WTC11 (cell line): ENCODE measurements at regions of chr1 and their contacts with region 1.

Region 1: GRCh38 chr1:36342481-36343478 is 19.3 kb upstream of the EVA1B start:
- DNase-seq: peak; percentile 73
- ATAC-seq: peak; percentile 85
- H3K4me3 Mint-ChIP-seq: no peak overlapping the region
- H3K27ac Mint-ChIP-seq: no peak overlapping the region
- H3K4me1 Mint-ChIP-seq: no peaks in the 10 kb centered on the region
- H3K27me3 Mint-ChIP-seq: no peaks in the 10 kb centered on the region
- CTCF ChIP-seq: peak; percentile 25; the same call in 1 of the 2 replicates

Region 2: DNA sequence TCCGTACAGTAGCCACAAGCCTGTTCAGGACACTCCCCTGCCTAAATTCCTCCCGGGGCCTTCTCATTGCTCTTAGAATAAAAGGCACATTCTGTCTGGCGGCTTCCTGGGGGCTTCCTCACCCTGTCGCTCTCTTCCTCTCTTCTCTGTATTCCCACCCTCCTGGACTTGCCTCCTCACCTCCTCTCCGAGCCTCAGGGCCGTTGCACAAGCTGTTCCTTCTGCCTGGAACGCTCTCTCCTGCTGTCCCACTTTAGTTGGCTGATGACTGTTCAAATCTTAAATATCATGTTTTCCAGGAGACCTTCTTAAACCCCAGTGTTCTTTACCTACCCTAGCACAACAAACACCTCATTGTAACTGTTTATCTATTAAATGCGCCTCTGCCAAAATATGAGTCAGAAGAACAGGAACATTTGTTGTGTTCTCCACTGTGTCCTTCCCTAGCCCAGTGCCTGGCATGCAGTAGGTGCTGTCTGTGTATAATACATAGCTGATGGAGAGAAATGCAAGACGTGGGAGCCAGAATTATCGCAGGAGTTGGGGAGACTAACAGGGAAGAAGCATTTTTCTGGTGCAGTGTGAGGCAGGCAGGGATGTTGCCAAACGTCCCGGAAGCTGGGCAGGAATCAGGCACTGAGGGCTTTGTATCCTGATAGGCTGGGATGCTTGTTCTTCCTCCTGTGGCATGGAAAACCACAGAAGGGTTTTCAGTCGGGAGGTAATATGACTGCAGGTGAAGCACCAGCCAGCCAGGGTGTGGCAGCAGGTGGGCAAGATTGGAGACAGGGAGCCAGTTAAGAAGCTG is 142.6 kb before region 1 on chr1:
- CTCF ChIA-PET with region 1: no interaction called
- POLR2A ChIA-PET with region 1: no interaction called
- DNase-seq: no peak
- ATAC-seq: no peak
- H3K4me3 Mint-ChIP-seq: no peak overlapping the region
- H3K27ac Mint-ChIP-seq: 0 out of 2 replicates have a peak overlapping the region, but pooled peaks have one; percentile 1
- H3K4me1 Mint-ChIP-seq: peaks cover 8% of the 10 kb centered on the region
- H3K27me3 Mint-ChIP-seq: no peaks in the 10 kb centered on the region; the same call in 1 of the 2 replicates
- CTCF ChIP-seq: no peak

Region 3: GRCh38 chr1:36323597-36324352 is 19.0 kb before region 1 on chr1 and contains the start of gene EVA1B:
- CTCF ChIA-PET with region 1: interaction called, 30 read pairs
- POLR2A ChIA-PET with region 1: interaction called, 3 read pairs
- DNase-seq: peak; percentile 74
- ATAC-seq: peak; percentile 15
- H3K4me3 Mint-ChIP-seq: peak within 1 kb of the TSS; percentile 76
- H3K27ac Mint-ChIP-seq: peak within 1 kb of the TSS; percentile 65
- H3K4me1 Mint-ChIP-seq: peaks cover 25% of the 10 kb centered on the region
- H3K27me3 Mint-ChIP-seq: peaks cover 10% of the 10 kb centered on the region
- CTCF ChIP-seq: no peak
- total RNA-seq, gene EVA1B: 32.0 to 45.2 TPM (median 41.5 TPM) in 3 replicates

Region 4: DNA sequence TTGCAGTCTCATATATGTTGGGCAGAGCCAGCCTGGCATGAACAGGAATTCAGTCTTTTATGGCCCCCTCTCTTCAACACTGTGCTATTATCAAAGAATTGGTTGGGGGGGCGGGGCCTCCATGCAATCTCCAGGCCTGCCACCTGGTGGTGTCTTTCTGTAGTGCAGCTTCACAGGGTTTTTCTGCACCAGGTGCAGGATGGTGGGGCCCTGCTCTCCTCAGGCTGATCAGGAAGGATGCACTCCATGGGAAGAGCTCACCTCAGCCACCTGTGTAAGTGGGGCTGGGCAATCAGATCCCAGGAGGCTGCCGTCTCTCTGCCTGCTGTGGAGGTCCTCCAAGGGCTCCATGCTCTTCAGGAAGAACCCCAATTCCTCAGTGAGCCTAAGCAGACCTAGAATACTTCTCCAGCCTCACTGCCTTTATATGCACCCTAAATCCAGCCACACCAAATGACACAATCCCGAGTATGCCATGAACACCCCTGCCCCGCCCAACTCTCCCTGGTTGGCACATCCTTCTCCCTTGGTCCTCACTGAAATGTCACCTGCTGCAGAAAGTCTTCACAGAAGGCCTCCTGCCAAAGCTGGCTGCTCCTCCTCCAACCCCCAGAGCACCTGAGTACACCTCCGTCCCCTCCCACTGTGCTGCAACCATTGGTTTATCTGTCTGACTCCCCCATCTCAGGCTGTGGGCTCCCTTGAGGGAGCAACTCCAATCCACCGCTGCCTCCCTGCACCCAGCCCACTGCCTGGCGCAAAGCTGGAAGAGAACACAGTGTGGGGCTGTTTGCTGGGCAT is 26.5 kb after region 1 on chr1:
- CTCF ChIA-PET with region 1: interaction called, 76 read pairs
- POLR2A ChIA-PET with region 1: no interaction called
- DNase-seq: peak; percentile 92
- ATAC-seq: peak; percentile 76
- H3K4me3 Mint-ChIP-seq: no peak overlapping the region
- H3K27ac Mint-ChIP-seq: peak overlapping the region; percentile 75
- H3K4me1 Mint-ChIP-seq: peaks cover 48% of the 10 kb centered on the region
- H3K27me3 Mint-ChIP-seq: no peaks in the 10 kb centered on the region
- CTCF ChIP-seq: peak; percentile 87

Region 5: DNA sequence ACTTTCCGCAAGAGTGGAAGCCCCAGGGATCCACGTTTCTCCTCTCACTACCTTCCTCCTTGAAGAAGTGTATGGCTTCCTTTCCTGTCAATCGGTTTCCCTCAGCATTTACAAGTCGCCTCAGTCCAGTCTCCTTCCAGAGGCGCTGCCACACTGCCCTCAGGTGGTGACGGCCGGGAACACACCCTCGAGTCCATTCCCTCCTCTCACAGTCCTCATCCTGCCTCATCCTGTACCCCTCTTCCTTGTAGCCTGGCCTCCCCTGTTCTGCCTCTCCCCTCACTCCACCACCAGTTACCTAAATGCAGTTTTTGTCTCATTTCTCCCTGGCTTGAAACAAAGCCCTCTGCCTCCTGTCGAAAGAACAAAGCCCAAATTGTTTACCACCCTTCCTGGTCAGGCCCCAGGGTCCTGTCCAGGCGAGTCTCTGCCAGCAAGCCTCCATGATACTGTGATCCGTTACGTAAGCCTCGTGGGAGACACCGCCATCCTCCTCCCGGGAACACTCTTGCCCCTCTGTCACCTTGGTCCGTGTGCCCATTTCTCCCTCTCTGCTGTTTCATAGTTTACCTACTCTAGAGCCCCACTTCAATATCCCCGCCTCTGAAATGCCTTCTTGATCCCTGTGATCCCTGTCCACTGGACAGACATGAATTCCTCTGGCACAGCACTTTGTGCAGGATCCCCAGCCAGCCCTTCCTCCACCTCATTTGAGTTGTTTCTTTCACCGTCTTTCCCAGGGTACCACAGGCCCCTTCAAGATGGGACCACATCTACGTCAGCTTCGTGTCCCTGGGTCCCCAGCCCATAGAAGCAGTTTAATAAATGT is 78.3 kb after region 1 on chr1:
- CTCF ChIA-PET with region 1: interaction called, 13 read pairs
- POLR2A ChIA-PET with region 1: no interaction called
- DNase-seq: peak; percentile 97
- ATAC-seq: peak; percentile 98
- H3K4me3 Mint-ChIP-seq: no peak overlapping the region
- H3K27ac Mint-ChIP-seq: peak overlapping the region; percentile 80
- H3K4me1 Mint-ChIP-seq: peaks cover 11% of the 10 kb centered on the region
- H3K27me3 Mint-ChIP-seq: no peaks in the 10 kb centered on the region; the same call in 1 of the 2 replicates
- CTCF ChIP-seq: peak; percentile 88

Region 6: DNA sequence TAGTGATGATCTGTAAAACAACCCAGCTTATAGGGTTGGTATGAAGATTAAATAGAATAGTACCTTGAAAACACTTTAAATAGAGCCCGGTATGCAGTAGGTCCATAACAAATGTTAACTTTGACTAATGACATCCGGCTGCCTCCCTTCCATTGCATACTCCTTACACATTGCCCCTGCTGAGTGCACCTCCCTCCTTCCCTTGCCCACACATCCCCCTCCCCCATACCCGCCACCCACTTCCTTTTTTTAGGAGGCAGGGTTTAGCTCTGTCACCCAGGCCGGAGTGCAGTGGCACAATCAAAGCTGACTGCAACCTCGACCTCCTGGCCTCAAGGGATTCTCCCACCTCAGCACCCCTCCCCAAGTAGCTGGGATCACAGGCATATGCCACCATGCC is 1107.2 kb after region 1 on chr1:
- CTCF ChIA-PET with region 1: no interaction called
- POLR2A ChIA-PET with region 1: no interaction called
- DNase-seq: no peak
- ATAC-seq: no peak
- H3K4me3 Mint-ChIP-seq: no peak overlapping the region
- H3K27ac Mint-ChIP-seq: no peak overlapping the region
- H3K4me1 Mint-ChIP-seq: peaks cover 61% of the 10 kb centered on the region
- H3K27me3 Mint-ChIP-seq: peaks cover 5% of the 10 kb centered on the region
- CTCF ChIP-seq: no peak